Transverse colon (tissue), 4 donors: ENCODE measurements at regions of chr4 and their contacts with region 1.

Region 1: DNA sequence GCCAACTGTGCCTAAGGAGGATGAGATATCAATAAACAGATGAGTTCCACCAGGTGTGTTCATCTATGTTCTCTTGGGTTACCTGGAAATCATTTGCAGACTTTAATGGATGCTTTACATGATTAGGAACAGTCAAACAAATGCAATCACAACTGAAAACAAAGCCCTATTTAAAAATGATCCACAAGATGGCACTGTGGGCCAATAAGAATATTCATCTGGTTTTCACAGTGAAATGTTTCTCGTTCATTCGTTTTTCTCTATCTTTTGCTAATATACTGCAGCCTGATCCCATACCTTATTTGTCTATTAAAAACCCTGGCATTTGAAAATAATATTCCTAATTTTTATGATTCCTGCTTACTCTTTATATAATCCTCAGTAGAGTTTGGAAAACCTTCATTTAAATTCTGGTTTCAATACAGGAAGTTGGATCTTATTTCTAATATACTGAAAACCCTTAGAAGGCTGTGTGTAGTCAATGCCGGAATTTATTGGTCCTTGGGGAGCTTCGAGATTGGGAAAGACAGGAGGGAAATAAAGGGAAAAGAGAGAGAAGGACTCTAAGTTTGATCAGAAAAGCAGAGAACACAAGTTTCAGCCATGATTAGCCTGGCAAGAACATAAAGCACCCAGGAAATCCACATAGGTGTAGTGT is 63.8 kb upstream of the TAPT1 start:
- DNase-seq: no peak
- H3K4me3 ChIP-seq: no peak overlapping the region
- H3K27ac ChIP-seq: no peak overlapping the region
- H3K4me1 ChIP-seq: peaks cover 0 to 12% (median 9%) of the 10 kb centered on the region in 4 donors
- H3K27me3 ChIP-seq: peaks cover 16% of the 10 kb centered on the region
- CTCF ChIP-seq: peak; percentile 51 to 62 (median 56)
- EP300 ChIP-seq: no peak
- POLR2A ChIP-seq: no peak

Region 2: GRCh38 chr4:16443504-16444088 is 153.6 kb after region 1 on chr4:
- in situ Hi-C with region 1: loop called in 1 of 4 experiments (anchors 25 kb)
- intact Hi-C with region 1: no loop called
- DNase-seq: no peak
- H3K4me3 ChIP-seq: no peak overlapping the region
- H3K27ac ChIP-seq: no peak overlapping the region
- H3K4me1 ChIP-seq: no peaks in the 10 kb centered on the region
- H3K27me3 ChIP-seq: no peaks in the 10 kb centered on the region
- CTCF ChIP-seq: peak; percentile 47 to 57 (median 49)
- EP300 ChIP-seq: no peak
- POLR2A ChIP-seq: no peak

Region 3: GRCh38 chr4:17324386-17324830 is 1034.4 kb after region 1 on chr4:
- in situ Hi-C with region 1: loop called in 3 of 4 experiments (anchors 10 to 25 kb)
- intact Hi-C with region 1: no loop called
- DNase-seq: peak; percentile 11
- H3K4me3 ChIP-seq: no peak overlapping the region
- H3K27ac ChIP-seq: no peak overlapping the region
- H3K4me1 ChIP-seq: peaks cover 0 to 9% (median 0%) of the 10 kb centered on the region in 4 donors
- H3K27me3 ChIP-seq: no peaks in the 10 kb centered on the region
- CTCF ChIP-seq: peak; percentile 42 to 59 (median 50)
- EP300 ChIP-seq: no peak
- POLR2A ChIP-seq: no peak

Region 4: GRCh38 chr4:17347445-17347844 is 1057.4 kb after region 1 on chr4:
- in situ Hi-C with region 1: loop called in 1 of 4 experiments (anchors 25 kb)
- intact Hi-C with region 1: no loop called
- DNase-seq: no peak
- H3K4me3 ChIP-seq: no peak overlapping the region
- H3K27ac ChIP-seq: no peak overlapping the region
- H3K4me1 ChIP-seq: no peaks in the 10 kb centered on the region
- H3K27me3 ChIP-seq: no peaks in the 10 kb centered on the region
- CTCF ChIP-seq: peak; percentile 17 to 35 (median 21)
- EP300 ChIP-seq: no peak
- POLR2A ChIP-seq: no peak

Region 5: GRCh38 chr4:17447675-17448298 is 1157.8 kb after region 1 on chr4:
- in situ Hi-C with region 1: loop called (anchors 25 kb)
- intact Hi-C with region 1: no loop called
- DNase-seq: peak; percentile 27
- H3K4me3 ChIP-seq: no peak overlapping the region
- H3K27ac ChIP-seq: no peak overlapping the region
- H3K4me1 ChIP-seq: no peaks in the 10 kb centered on the region
- H3K27me3 ChIP-seq: no peaks in the 10 kb centered on the region
- CTCF ChIP-seq: peak; percentile 32 to 58 (median 48)
- EP300 ChIP-seq: no peak
- POLR2A ChIP-seq: no peak

Region 6: DNA sequence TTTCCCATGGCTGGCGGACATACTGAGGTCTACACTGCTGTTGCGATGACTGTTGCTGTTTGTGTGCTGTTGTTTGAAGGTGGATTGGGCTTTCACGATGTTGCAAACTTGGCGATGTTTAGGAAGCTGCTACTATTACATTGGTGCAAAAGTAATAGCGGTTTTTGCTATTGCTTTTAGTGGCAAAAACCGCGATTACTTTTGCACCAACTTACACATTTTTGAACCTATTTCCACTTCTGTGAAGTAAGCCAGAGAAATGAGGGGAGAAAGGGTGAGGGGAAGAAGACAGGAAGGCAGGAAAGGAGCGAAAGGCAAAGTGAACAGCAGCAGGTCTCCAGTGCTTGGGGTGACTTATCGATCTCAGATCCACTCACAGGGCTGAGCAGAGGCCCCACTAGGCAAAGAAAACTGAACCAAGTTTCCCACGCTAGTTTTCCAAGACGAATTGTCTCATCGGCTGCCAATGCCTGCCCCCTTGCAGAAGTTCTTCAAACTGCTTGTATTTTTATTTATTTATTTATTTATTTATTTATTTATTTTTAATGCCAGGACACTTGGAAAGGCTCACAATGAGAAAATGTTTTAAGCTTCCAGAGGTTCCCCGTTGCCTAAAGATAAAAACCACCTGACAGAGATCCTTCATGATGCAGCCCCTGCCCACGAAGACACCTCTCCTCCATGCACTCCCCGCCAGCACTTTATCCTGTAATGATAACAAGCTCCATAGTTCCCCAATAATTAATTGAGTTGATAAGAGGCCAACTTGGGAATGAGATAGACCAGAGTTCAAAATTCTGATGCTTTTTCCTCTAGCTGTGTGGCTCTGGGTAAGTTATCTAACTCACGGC is 1178.6 kb after region 1 on chr4:
- in situ Hi-C with region 1: loop called in 2 of 4 experiments (anchors 25 kb)
- intact Hi-C with region 1: no loop called
- DNase-seq: no peak
- H3K4me3 ChIP-seq: no peak overlapping the region
- H3K27ac ChIP-seq: no peak overlapping the region
- H3K4me1 ChIP-seq: no peaks in the 10 kb centered on the region
- H3K27me3 ChIP-seq: no peaks in the 10 kb centered on the region
- CTCF ChIP-seq: peak in 3 of 5 experiments; percentile 39 to 45 (median 40)
- EP300 ChIP-seq: no peak
- POLR2A ChIP-seq: no peak